Ascending aorta (tissue), 2 donors: ENCODE measurements at regions of chr17 and their contacts with region 1.

Region 1: DNA sequence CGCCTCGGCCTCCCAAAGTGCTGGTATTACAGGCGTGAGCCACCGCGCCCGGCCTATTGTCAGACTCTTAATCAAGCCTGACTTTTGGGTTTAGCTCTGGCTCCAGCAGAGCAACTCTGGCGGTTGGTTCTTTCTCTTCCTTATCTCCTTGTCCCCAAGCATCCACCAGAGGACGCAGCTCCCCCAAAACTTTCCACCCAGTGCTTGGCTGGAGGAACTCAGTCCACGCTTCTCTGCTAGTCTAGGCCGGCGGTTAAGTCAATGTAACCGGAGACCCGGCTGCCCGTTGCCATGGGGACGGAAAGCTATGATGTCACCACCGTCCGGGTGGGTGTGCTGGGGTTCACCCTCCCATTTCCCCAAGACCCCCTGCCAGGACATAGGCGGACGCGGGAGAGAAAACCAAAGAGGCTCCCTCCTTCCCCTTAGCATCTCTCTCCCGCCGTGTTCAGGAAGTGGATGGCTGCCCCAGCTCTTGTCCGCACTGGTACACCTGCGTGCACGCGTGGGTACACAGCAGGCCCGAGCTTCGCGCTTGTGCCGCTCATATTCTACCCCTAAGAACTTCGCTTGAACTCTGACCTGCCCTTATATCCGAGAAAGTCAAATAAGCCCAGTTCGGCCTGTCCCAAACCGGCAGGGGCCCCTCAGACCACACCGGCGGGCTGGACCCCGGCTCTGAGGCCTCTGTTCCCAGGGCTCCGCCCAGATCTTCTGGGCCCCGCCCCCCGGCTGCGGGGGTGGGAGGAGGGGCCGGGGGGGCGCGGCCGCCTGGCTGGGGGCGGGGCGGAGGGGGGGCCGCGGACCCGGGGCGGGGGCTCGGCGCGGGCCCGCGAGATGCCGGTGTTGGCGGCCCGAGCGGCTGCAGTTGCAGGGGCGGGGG is at the start of gene RND2:
- DNase-seq: peak; percentile 77 to 95
- H3K4me3 ChIP-seq: peak within 1 kb of the TSS; percentile 50 to 76
- H3K27ac ChIP-seq: peak within 1 kb of the TSS; percentile 64 to 76
- H3K4me1 ChIP-seq: peaks cover 0 to 21% of the 10 kb centered on the region in 2 donors
- H3K27me3 ChIP-seq: no peaks in the 10 kb centered on the region
- CTCF ChIP-seq: peak; percentile 74 to 89 (median 82)
- total RNA-seq, gene RND2: 7.3 TPM

Region 2: DNA sequence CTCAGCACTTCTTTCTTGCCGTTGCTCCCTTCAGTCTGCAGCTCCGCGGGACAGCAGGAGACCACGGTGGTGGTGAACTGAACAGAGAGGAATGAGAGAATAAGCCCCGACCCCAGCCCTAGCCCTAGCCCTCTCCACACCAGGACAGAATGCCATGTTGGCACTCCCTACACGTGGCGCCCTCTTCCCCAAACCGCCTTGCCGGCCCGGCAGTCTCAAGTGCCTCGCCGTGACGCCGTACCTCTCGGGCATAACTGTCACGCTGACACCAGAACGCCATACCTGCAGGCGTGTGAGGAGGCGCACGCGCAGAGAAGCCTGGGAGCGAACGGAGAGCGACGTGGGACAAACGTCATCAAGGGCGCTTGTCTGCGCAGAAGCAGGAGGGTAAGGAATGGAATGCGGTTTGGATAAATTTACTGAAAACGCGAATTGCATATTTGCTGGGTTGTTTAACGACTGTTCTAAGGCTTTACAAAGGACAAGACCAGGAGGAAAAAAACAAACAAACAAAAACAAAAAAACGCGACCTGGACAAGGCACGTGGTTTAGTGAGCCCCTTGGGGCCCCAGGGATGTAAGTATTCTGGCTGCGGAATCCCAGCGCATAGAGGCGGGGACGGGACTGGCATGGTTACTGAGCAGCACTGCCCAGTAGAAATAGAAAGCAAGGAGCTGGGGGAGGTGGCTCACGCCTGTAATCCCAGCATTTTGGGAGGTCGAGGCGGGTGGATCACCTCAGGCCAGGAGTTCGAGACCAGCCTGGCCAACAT is 60.3 kb before region 1 on chr17 and contains the start of gene AARSD1:
- intact Hi-C with region 1: no loop called
- DNase-seq: peak; percentile 62 to 94
- H3K4me3 ChIP-seq: peak within 1 kb of the TSS; percentile 69 to 74
- H3K27ac ChIP-seq: peak within 1 kb of the TSS; percentile 78 to 84
- H3K4me1 ChIP-seq: peaks cover 0 to 4% of the 10 kb centered on the region in 2 donors
- H3K27me3 ChIP-seq: no peaks in the 10 kb centered on the region
- CTCF ChIP-seq: no peak
- total RNA-seq, gene AARSD1: 3.8 TPM

Region 3: DNA sequence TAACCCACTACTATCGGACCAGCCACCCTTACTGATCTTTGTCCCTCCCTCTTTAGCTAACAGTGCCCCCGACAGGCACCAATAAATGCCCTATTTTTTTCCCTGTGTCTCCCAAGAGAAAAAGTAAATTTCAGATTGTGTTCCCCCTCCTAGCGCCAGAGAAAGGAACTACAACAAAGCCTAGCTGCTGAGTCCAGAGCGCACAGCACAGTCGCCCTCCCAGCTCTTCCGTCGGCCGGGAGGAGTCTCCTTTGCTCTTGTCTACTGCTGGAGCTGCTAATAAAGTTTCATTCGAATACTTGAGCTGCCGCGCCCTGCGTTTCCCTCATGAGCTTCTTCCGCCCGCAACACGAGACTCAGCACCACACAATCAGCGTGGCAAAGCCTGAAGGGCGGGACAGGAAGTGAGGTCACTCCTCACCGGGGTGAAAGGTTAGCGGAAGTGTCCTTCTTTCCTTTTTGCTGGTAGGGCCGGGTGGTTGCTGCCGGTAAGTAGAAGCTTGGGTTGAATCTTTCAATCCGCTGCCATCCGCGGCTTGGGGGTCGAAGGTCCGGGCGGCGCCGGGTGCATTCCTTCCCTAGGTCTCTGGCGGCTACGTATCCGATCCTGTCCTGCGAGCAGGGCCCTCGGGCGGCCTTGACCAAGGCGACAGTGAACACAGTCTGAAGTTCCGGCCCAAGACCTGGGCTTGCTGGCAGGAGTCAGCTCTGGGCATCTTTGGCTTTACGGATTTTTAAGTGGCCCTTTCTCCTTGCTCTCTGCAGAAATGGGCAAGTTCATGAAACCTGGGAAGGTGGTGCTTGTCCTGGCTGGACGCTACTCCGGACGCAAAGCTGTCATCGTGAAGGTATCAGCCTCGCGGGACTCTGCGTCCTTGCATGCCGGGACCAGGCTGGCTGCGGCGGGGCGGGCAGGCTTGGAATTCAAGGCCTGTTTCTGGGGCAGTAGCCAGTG is 26.4 kb before region 1 on chr17 and contains the start of gene RPL27:
- intact Hi-C with region 1: loop called (anchors 2 kb)
- DNase-seq: peak; percentile 95 to 100
- H3K4me3 ChIP-seq: peak within 1 kb of the TSS; percentile 78 to 94
- H3K27ac ChIP-seq: peak within 1 kb of the TSS; percentile 81 to 91
- H3K4me1 ChIP-seq: peaks cover 7 to 13% of the 10 kb centered on the region in 2 donors
- H3K27me3 ChIP-seq: no peaks in the 10 kb centered on the region
- CTCF ChIP-seq: peak; percentile 89 to 91 (median 90)
- total RNA-seq, gene RPL27: 417 TPM

Region 4: DNA sequence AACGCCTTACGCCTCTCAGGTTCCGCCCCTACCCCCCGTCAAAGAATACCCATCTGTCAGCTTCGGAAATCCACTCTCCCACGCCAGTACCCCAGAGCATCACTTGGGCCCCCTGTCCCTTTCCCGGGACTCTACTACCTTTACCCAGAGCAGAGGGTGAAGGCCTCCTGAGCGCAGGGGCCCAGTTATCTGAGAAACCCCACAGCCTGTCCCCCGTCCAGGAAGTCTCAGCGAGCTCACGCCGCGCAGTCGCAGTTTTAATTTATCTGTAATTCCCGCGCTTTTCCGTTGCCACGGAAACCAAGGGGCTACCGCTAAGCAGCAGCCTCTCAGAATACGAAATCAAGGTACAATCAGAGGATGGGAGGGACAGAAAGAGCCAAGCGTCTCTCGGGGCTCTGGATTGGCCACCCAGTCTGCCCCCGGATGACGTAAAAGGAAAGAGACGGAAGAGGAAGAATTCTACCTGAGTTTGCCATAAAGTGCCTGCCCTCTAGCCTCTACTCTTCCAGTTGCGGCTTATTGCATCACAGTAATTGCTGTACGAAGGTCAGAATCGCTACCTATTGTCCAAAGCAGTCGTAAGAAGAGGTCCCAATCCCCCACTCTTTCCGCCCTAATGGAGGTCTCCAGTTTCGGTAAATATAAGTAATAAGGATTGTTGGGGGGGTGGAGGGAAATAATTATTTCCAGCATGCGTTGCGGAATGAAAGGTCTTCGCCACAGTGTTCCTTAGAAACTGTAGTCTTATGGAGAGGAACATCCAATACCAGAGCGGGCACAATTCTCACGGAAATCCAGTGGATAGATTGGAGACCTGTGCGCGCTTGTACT is 100.7 kb after region 1 on chr17 and contains the start of gene BRCA1:
- intact Hi-C with region 1: loop called (anchors 2 kb)
- DNase-seq: peak; percentile 92 to 97
- H3K4me3 ChIP-seq: peak within 1 kb of the TSS; percentile 69 to 76
- H3K27ac ChIP-seq: peak within 1 kb of the TSS; percentile 73 to 87
- H3K4me1 ChIP-seq: peaks cover 0 to 25% of the 10 kb centered on the region in 2 donors
- H3K27me3 ChIP-seq: no peaks in the 10 kb centered on the region
- CTCF ChIP-seq: no peak
- total RNA-seq, gene BRCA1: 0.85 TPM

Region 5: DNA sequence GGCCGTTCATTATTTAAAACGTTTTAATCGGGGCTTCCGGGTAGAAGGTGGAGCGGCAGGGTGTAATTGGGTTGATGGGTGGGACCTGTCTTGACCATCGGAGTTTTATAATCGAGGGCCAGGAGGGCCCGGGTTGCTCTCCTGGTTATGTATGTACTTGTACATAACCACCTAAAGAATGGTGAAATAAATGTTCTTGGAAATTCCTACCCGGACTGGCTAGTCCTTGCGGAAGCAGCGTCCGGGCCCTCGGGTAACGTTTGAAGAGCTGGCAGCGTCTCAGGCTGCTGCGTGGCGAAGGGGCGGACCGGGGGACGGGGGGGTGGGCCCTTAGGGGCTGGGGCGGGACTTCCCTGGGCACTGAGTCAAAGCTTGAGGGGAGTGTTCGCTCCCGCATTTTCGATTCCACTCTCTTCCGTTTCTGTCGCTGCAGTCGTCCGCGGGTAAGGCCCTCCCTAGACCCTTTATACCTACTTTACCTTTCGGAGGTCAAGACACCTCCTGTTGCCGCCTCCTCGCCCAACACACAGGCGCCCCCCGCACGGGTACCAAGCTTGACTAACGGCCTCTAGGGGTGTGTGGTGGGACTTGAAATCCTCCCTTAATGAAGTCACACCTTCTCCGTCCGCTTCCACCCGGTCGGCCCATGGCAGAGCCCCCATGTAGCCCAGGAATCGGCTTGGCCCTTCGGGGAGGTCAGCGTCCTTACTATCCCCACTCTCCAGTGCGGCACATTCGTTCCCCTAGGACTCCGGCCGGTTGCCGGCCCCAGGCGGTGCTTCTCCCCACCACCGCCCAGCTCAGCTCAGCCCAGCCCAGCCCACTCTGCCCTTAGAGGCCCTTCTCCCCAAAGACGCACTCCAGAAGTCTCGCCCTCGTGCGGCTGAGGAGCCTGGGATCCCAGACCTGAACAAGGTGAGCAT is 187.1 kb after region 1 on chr17 and contains the start of gene TMEM106A:
- intact Hi-C with region 1: loop called (anchors 2 kb)
- DNase-seq: peak; percentile 39 to 89
- H3K4me3 ChIP-seq: peak within 1 kb of the TSS; percentile 74 to 76
- H3K27ac ChIP-seq: peak within 1 kb of the TSS; percentile 80 to 83
- H3K4me1 ChIP-seq: peaks cover 0 to 12% of the 10 kb centered on the region in 2 donors
- H3K27me3 ChIP-seq: no peaks in the 10 kb centered on the region
- CTCF ChIP-seq: peak; percentile 25 to 50 (median 47)
- total RNA-seq, gene TMEM106A: 18.5 TPM

Region 6: DNA sequence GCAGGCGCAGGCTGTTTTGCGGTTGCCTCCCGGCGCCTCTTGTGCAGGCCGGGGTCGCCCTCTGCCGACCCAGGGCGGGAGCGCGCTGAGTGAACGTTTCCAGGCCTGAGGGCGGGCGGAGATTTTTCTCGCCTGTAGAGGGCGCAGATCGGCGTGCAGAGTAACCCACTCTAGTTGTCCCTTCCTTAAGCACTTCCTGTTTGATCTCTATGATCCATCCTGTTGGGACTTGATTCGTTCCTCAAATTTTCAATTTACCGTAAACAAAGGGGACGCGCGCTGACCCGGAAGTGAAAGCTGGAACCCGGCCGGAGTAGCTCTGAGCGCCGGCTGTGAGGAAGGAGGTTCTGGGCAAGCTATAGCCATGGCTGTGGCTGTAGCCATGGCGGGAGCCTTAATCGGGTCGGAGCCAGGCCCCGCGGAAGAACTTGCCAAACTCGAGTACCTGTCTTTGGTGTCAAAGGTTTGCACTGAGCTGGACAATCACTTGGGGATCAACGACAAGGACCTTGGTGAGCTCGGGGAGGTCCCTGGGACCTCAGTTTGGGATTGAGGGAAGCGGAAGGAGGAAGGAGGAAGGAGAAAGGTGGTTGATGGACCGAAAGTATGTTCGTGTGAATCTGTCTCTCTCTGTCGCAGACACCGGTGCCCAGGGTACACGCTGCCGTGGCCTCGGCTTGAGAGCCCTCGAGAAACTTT is 459.2 kb after region 1 on chr17 and contains the start of gene DHX8:
- intact Hi-C with region 1: loop called (anchors 10 kb)
- DNase-seq: peak; percentile 87 to 98
- H3K4me3 ChIP-seq: peak within 1 kb of the TSS; percentile 71 to 83
- H3K27ac ChIP-seq: peak within 1 kb of the TSS; percentile 71 to 80
- H3K4me1 ChIP-seq: peaks cover 3 to 24% of the 10 kb centered on the region in 2 donors
- H3K27me3 ChIP-seq: no peaks in the 10 kb centered on the region
- CTCF ChIP-seq: peak; percentile 100
- total RNA-seq, gene DHX8: 50.0 TPM